Heart right ventricle (tissue), 16 donors: ENCODE measurements at regions of chr1 and their contacts with region 1.

Region 1: GRCh38 chr1:27671964-27672749 is at the start of gene IFI6:
- DNase-seq: peak; percentile 79 to 92
- ATAC-seq: peak; percentile 96 to 98 (median 98)
- H3K4me3 ChIP-seq: peak within 1 kb of the TSS; percentile 49 to 88 (median 62)
- H3K27ac ChIP-seq: peak within 1 kb of the TSS; percentile 42 to 93 (median 84)
- H3K4me1 ChIP-seq: peaks cover 4 to 52% (median 35%) of the 10 kb centered on the region in 9 donors
- H3K27me3 ChIP-seq: no peaks in the 10 kb centered on the region
- CTCF ChIP-seq: peak; percentile 9 to 62 (median 47)
- total RNA-seq, gene IFI6: 24.2 to 143 (median 43.7) TPM

Region 2: DNA sequence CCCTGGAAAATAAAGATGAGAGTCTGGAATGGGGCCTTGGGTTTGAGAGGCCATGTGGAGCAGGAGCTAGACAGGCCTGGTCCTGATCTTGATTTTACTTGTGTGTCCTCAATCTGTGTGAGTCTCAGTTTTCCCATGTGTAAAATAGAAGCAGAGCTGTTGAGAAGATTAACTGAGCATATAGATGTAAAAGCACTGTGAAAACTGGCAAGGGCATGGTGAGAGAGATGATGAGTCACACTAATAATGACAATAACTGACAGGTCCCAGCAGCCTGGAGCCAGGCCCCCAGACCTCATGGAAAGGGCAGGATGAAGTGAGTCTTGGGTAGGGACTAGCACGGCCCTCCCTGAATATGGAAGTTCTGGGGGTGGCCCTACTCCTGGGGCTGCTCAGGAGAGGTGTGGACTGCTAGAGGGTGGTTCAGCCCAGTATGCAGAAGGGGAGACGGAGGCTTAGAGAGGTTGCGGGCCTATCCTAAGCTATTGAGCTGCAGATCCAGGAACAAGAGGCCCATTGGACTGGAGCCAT is 65.4 kb before region 1 on chr1:
- intact Hi-C with region 1: no loop called
- DNase-seq: no peak
- ATAC-seq: no peak
- H3K4me3 ChIP-seq: no peak overlapping the region
- H3K27ac ChIP-seq: peak overlapping the region in 1 of 10 donors; percentile 51
- H3K4me1 ChIP-seq: peaks cover 5 to 54% (median 29%) of the 10 kb centered on the region in 9 donors
- H3K27me3 ChIP-seq: peaks cover 0 to 4% (median 0%) of the 10 kb centered on the region in 7 donors
- CTCF ChIP-seq: peak in 1 of 9 donors; percentile 12

Region 3: GRCh38 chr1:27719286-27720251 is 47.4 kb after region 1 on chr1:
- intact Hi-C with region 1: loop called in 5 of 10 experiments (anchors 2 to 5 kb)
- DNase-seq: no peak
- ATAC-seq: no peak
- H3K4me3 ChIP-seq: no peak overlapping the region
- H3K27ac ChIP-seq: no peak overlapping the region
- H3K4me1 ChIP-seq: peaks cover 0 to under 1% (median 0%) of the 10 kb centered on the region in 9 donors
- H3K27me3 ChIP-seq: peaks cover 0 to 10% (median 0%) of the 10 kb centered on the region in 7 donors
- CTCF ChIP-seq: peak in 1 of 9 donors; percentile 9

Region 4: GRCh38 chr1:27725374-27726173 is 53.4 kb after region 1 on chr1 and contains the start of gene FAM76A:
- intact Hi-C with region 1: loop called in 7 of 10 experiments (anchors 1 to 5 kb)
- DNase-seq: peak; percentile 99 to 100
- ATAC-seq: peak; percentile 97 to 99 (median 98)
- H3K4me3 ChIP-seq: peak within 1 kb of the TSS; percentile 70 to 98 (median 93)
- H3K27ac ChIP-seq: peak within 1 kb of the TSS; percentile 83 to 98 (median 92)
- H3K4me1 ChIP-seq: peaks cover 0 to 20% (median 16%) of the 10 kb centered on the region in 9 donors
- H3K27me3 ChIP-seq: no peaks in the 10 kb centered on the region
- CTCF ChIP-seq: peak in 8 of 9 donors; percentile 39 to 78 (median 64)
- total RNA-seq, gene FAM76A: 9.6 to 15.1 (median 13.1) TPM

Region 5: DNA sequence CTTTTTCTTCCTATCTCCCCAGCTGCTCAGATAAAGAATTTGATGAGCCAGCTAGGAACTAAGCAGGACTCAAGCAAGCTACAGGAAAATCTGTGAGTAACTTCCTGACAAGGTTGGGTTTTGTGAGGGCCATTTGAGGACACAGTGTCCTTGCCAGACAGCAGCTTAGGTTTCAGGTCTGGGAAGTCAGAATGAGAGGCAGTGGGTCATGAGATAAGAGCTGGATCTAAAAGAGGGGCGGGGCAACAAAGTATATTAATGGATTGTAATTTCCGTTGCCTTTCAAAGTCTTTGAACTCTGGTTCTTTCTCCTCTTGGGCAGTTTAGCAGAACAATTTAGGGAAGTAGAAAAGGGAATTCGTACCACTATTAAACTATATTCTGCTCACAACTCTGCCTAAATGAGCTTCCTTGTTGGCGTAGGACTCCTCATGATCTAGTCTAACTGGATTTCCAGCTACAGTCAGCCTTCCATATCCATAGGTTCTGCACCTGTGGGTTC is 117.4 kb after region 1 on chr1:
- intact Hi-C with region 1: loop called in 2 of 10 experiments (anchors 10 kb)
- DNase-seq: peak in 1 of 2 donors; percentile 66
- ATAC-seq: peak; percentile 91 to 95 (median 93)
- H3K4me3 ChIP-seq: no peak overlapping the region
- H3K27ac ChIP-seq: peak overlapping the region in 9 of 10 donors; percentile 20 to 67 (median 42)
- H3K4me1 ChIP-seq: peaks cover 0 to 63% (median 47%) of the 10 kb centered on the region in 9 donors
- H3K27me3 ChIP-seq: no peaks in the 10 kb centered on the region
- CTCF ChIP-seq: no peak